ENCODE measurements at regions of chr6 and their contacts with region 1.

Region 1: DNA sequence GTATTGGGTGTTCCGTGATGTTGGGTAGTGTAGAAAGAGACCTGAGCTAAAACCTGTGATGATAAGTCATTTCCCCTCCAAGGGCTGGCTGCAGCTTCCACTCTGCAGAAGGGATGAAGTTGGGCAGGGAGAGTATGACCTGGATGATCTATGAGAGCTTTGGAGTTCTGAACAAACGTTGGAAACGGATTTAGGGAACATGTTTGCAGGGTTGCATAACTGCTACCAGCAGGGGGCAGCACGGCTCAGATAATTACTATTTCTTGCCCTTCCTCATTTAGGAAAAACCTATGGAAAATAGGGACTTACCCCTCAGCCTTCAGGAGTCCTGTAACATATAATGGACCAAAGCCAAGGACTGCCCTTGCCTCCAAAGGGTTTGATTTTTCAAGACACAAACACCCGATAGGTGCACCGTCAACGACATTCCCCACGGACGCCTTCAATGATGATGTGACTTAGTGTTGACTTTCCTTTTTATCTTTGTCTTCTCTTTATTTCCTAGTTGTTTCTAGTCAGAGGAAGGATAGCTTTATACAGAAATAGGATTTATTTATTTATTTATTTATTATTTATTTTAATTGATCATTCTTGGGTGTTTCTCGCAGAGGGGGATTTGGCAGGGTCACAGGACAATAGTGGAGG is 164.9 kb upstream of the SASH1 start:
- DNase-seq: peak; percentile 14 to 44 (median 18)
- H3K4me3 ChIP-seq: no peak overlapping the region
- H3K27ac ChIP-seq: no peak overlapping the region
- H3K4me1 ChIP-seq: no peaks in the 10 kb centered on the region
- H3K27me3 ChIP-seq: peaks cover 3 to 36% (median 18%) of the 10 kb centered on the region in 5 experiments

Region 2: DNA sequence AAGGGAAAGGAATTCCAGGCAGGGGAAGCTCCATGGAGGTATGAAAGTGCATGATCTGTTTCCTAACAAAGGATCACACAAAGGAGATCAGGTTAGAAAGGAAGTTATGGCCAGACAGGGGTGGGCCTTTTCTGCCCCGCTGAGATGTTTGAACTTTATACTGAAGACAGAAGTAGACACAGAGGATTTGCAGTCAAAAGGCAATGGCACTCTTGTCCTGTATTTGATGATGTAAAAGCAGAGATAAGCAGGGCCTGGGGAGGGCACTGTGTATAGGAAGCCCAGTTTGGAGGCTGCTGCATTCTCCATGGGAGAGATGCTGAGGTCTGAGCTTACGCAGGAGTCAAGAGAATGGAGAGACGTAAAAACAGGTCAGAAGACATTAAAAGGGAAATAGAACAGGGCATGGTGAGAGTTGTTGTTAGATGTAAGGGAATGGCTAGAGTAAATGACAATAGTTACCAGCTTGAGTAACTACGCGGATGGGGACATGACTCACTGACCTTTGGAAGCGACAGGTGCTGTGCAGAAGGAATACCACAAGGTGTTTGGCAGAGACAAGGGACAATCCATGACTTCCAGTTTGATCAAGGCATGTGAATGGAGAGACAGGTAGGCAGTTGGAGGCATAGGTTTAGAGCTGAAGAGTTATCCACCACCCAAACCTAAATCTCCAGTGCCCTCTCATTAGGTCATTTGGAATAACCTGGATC is 25.6 kb before region 1 on chr6:
- CTCF ChIA-PET with region 1: no interaction called
- POLR2A ChIA-PET with region 1: no interaction called
- DNase-seq: no peak
- H3K4me3 ChIP-seq: no peak overlapping the region
- H3K27ac ChIP-seq: no peak overlapping the region
- H3K4me1 ChIP-seq: no peaks in the 10 kb centered on the region
- H3K27me3 ChIP-seq: peaks cover 0 to 28% (median 9%) of the 10 kb centered on the region in 5 experiments

Region 3: DNA sequence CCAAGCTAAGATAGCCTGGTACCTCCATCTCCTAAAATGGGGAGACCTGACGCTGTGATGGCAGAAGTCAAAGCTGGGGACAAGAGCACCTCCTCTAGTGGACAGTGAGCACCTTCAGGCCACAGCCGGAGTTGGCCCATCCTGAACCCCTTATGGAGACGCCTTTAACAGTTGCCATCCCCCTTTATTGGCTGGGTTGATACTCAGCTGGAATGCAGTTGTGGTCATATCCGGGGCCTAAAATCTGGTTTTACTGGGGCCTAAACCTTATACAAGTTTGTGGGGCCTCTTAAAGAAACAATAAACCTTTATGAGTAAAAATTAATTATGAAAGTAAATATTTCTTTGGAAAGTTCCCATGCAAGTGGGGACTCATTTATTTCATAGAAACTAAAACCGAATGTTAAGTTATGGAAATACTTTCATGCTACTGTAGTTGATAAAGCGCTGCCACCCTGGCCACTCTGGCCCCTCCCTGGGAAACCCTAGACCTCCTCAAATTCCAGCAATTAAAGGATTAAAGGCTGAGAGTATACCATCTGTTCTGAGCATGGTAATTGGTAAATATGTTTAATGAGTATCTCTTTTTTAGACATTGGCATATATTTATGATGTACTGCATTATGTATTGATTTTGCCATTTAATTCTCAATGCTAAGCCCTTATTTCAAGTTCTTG is 69.8 kb after region 1 on chr6:
- CTCF ChIA-PET with region 1: interaction called, 14 read pairs
- POLR2A ChIA-PET with region 1: no interaction called
- DNase-seq: no peak
- H3K4me3 ChIP-seq: no peak overlapping the region
- H3K27ac ChIP-seq: no peak overlapping the region
- H3K4me1 ChIP-seq: no peaks in the 10 kb centered on the region
- H3K27me3 ChIP-seq: peaks cover 2 to 24% (median 6%) of the 10 kb centered on the region in 5 experiments